ENCODE measurements at regions of chrX and their contacts with region 1.

Region 1: DNA sequence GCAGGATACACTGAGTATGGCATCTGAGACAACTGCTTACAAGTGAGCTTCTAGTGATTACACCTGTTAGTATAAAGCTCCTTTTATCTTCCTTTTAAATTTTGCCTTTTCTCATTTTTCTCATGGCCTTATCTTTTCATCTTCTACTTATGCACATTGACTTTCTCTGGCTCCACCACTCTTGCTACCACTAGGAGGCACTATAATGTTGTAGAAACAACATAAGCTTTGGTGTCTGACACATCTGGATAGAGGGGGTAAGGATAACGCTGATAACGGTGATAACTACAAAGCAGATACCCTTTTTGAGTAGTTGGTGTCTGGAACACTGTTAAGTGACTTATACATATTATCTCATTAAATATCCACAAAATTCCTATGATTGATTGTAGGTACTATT is 187.4 kb upstream of the TEX13C start:
- DNase-seq: peak in 3 of 14 experiments; percentile 4 to 10 (median 6)
- ATAC-seq: no peak
- H3K4me3 ChIP-seq: no peak overlapping the region
- H3K4me3 Mint-ChIP-seq: no peak overlapping the region
- H3K27ac ChIP-seq: no peak overlapping the region
- H3K27ac Mint-ChIP-seq: no peak overlapping the region
- H3K4me1 ChIP-seq: no peaks in the 10 kb centered on the region
- H3K4me1 Mint-ChIP-seq: no peaks in the 10 kb centered on the region
- H3K27me3 ChIP-seq: no peaks in the 10 kb centered on the region
- H3K27me3 Mint-ChIP-seq: no peaks in the 10 kb centered on the region
- CTCF ChIP-seq: no peak

Region 2: GRCh38 chrX:124388562-124388961 is 743.7 kb before region 1 on chrX:
- CTCF ChIA-PET with region 1: no interaction called
- POLR2A ChIA-PET with region 1: no interaction called
- intact Hi-C with region 1: loop called in 1 of 2 experiments (anchors 5 kb)
- DNase-seq: peak; percentile 24 to 79 (median 48)
- ATAC-seq: peak; percentile 83
- H3K4me3 ChIP-seq: no peak overlapping the region
- H3K4me3 Mint-ChIP-seq: no peak overlapping the region
- H3K27ac ChIP-seq: no peak overlapping the region
- H3K27ac Mint-ChIP-seq: peak overlapping the region; percentile 36
- H3K4me1 ChIP-seq: no peaks in the 10 kb centered on the region
- H3K4me1 Mint-ChIP-seq: peaks cover 35% of the 10 kb centered on the region
- H3K27me3 ChIP-seq: no peaks in the 10 kb centered on the region
- H3K27me3 Mint-ChIP-seq: no peaks in the 10 kb centered on the region
- CTCF ChIP-seq: peak; percentile 64

Region 3: DNA sequence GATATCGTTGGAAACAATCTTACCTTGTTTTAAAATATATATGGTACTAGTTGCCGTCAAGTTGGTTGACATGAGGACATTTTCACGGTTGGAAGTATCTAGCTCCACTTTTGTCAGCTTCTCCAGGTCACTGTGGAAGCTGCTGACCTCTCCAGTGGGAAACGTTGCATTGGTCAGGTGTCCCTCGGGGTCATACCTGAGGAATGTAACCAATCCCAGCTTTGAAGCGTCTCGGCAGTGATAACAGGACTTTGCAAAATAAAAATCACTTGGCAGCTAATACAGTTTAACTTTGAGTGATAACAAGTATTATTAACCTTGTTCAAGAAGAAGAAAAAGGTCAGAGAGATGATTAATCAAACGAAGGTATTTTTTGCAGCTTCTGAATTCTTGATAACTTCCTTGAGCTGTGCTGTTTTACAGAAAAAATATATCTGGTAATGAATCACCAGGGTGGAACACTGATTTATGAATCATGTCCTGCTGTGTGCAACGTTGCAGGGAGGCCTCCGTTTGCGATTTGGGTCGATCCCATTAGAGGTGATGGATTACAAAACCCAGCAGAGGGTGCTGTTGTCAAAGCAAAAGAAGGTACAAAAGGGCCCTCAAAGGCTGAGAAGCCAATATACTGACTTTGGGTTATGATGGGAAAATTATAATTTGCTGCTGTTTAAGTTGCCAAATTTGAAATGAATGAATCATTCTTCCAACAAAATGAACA is 725.8 kb before region 1 on chrX:
- CTCF ChIA-PET with region 1: no interaction called
- POLR2A ChIA-PET with region 1: no interaction called
- intact Hi-C with region 1: loop called in 1 of 2 experiments (anchors 5 kb)
- DNase-seq: peak in 13 of 14 experiments; percentile 12 to 71 (median 43)
- ATAC-seq: peak; percentile 48
- H3K4me3 ChIP-seq: no peak overlapping the region
- H3K4me3 Mint-ChIP-seq: no peak overlapping the region
- H3K27ac ChIP-seq: no peak overlapping the region
- H3K27ac Mint-ChIP-seq: peak overlapping the region; percentile 14
- H3K4me1 ChIP-seq: no peaks in the 10 kb centered on the region
- H3K4me1 Mint-ChIP-seq: peaks cover 20% of the 10 kb centered on the region
- H3K27me3 ChIP-seq: no peaks in the 10 kb centered on the region
- H3K27me3 Mint-ChIP-seq: no peaks in the 10 kb centered on the region
- CTCF ChIP-seq: no peak

Region 4: DNA sequence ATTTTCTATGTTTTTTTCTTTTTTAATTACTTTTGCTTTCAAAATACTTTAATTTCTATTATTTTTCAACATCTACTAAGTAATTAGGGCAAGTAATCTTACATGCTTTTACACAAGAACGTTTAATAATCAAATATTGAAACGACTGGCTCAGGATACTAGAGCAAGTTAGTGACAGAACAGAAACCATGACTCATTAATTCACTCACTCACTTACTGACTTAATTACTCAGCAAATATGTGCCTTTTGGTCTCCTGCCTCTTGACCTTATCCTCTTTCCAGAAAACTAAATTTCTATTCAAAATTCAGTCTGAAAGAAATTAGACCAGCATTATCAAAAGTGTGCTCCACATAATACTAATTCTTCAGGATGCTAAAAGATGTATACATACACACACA is 127.5 kb before region 1 on chrX:
- CTCF ChIA-PET with region 1: no interaction called
- POLR2A ChIA-PET with region 1: no interaction called
- intact Hi-C with region 1: no loop called
- DNase-seq: no peak
- ATAC-seq: no peak
- H3K4me3 ChIP-seq: no peak overlapping the region
- H3K4me3 Mint-ChIP-seq: no peak overlapping the region
- H3K27ac ChIP-seq: no peak overlapping the region
- H3K27ac Mint-ChIP-seq: no peak overlapping the region
- H3K4me1 ChIP-seq: no peaks in the 10 kb centered on the region
- H3K4me1 Mint-ChIP-seq: no peaks in the 10 kb centered on the region
- H3K27me3 ChIP-seq: no peaks in the 10 kb centered on the region
- H3K27me3 Mint-ChIP-seq: no peaks in the 10 kb centered on the region
- CTCF ChIP-seq: no peak

Region 5: DNA sequence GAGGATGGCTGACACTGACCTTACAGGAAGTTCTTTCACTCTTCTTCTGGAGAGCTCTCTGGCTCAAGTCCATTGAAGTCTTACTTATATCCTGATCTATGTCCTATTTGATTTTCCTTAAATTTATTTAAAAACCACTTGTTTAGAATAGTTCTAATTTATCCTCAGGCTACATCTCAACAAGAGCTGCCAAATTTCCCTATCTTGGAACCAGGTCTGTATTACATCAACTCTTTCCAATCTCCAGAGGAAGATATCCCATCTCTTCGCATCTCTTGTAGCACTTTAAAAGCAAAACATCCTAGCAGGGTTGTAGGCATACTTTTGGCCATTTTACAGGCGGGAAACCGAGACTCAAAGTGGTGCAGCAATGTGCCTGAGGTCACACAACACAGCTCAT is 103.2 kb before region 1 on chrX:
- CTCF ChIA-PET with region 1: no interaction called
- POLR2A ChIA-PET with region 1: no interaction called
- intact Hi-C with region 1: no loop called
- DNase-seq: no peak
- ATAC-seq: no peak
- H3K4me3 ChIP-seq: no peak overlapping the region
- H3K4me3 Mint-ChIP-seq: no peak overlapping the region
- H3K27ac ChIP-seq: no peak overlapping the region
- H3K27ac Mint-ChIP-seq: no peak overlapping the region
- H3K4me1 ChIP-seq: no peaks in the 10 kb centered on the region
- H3K4me1 Mint-ChIP-seq: peaks cover 8% of the 10 kb centered on the region
- H3K27me3 ChIP-seq: no peaks in the 10 kb centered on the region
- H3K27me3 Mint-ChIP-seq: no peaks in the 10 kb centered on the region
- CTCF ChIP-seq: no peak

Measured in CD4-positive, alpha-beta T cell (primary cell).